GM12878 (cell line): ENCODE measurements at regions of chr5 and their contacts with region 1.

Region 1: DNA sequence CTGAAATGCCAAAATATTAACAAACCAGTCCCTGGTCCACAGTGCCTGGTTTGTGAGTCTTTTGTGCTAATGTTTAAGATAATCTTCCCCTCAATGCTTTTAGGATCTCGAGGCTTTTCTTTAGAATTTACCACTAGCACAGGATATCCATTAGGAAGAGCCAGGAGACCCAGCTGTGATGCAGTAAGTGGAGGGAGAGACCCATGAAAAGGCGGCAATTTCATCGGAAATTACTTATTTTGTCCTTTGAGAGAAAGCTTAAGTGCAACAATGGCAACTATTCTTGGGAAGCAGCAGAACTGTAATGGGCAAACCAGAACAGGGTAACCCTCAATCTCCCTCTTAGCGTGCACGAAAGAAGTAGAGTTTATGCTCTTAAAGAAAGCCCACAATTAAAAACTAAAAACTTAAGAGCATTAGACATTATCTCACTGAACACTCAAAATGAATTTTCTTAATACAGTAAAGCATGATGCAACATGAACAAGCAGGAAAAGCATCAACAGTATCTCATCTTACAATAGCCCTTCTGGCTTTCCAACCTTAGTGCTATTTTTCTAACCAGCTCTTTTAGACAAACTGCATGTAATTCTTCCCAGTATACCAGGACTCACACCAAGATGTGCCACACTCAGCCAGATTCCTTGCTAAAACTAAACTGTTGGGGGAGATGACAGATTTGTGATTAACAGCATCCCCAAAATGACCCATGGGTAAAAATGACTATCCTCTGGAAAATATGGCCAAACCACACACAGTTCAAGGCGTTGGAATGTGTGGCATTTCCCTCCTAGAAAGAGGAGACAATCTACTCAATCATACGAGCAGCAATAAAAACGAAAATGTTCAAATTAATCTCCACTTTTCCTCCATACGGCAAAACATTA is 36.4 kb downstream of the PWWP2A start:
- DNase-seq: no peak
- ATAC-seq: no peak
- H3K4me3 ChIP-seq: no peak overlapping the region
- H3K27ac ChIP-seq: no peak overlapping the region
- H3K4me1 ChIP-seq: no peaks in the 10 kb centered on the region
- H3K27me3 ChIP-seq: no peaks in the 10 kb centered on the region
- CTCF ChIP-seq: no peak
- EP300 ChIP-seq: no peak
- POLR2A ChIP-seq: no peak
- RAD21 ChIP-seq: no peak

Region 2: DNA sequence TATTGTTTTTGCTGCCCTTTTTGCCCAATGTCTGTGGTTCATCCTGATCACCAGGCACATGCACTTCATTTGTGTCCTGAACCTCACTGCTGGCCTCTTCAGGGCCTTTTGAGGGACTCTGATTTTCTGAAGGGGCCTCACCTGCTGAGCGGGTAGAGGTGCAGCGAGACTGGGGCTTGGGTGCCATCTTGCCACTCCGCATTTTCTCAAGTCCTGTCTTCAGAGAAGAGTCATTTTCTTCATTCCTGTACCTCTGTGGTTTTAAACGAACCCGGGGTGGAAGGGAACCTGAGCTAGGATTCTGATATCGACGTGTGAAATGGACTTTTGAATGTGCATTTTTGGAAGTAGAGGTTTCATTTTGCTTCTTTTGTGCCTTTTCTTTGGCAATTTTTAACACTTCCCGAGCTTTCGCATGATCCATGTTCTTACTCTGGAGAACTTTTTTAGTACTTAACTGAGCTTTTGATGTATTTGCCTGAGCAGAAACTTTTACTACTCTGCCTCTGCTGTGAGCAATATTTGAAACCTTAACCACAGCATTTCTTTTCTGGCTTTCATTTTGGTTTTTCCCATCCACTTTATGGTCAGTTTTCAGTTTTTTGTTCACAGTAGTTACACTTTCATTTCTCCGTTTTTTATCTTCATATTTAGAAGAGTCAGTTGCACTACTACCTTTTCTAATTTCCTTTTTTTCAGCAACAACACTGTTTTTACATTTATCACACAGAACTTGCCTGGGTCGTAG is 10.3 kb after region 1 on chr5:
- CTCF ChIA-PET with region 1: interaction called, 53 read pairs
- POLR2A ChIA-PET with region 1: interaction called, 3 read pairs
- RAD21 ChIA-PET with region 1: interaction called, 7 read pairs
- SMC1A ChIA-PET with region 1: interaction called, 22 read pairs
- in situ Hi-C with region 1: no loop called
- intact Hi-C with region 1: no loop called
- DNase-seq: peak; percentile 72
- ATAC-seq: peak; percentile 79
- H3K4me3 ChIP-seq: peak overlapping the region; percentile 60
- H3K27ac ChIP-seq: peak overlapping the region; percentile 73
- H3K4me1 ChIP-seq: peaks cover 38% of the 10 kb centered on the region
- H3K27me3 ChIP-seq: no peaks in the 10 kb centered on the region
- CTCF ChIP-seq: no peak
- EP300 ChIP-seq: peak in 1 of 2 experiments; percentile 50; a peak in 1 of 4 replicates
- POLR2A ChIP-seq: no peak
- RAD21 ChIP-seq: no peak

Region 3: DNA sequence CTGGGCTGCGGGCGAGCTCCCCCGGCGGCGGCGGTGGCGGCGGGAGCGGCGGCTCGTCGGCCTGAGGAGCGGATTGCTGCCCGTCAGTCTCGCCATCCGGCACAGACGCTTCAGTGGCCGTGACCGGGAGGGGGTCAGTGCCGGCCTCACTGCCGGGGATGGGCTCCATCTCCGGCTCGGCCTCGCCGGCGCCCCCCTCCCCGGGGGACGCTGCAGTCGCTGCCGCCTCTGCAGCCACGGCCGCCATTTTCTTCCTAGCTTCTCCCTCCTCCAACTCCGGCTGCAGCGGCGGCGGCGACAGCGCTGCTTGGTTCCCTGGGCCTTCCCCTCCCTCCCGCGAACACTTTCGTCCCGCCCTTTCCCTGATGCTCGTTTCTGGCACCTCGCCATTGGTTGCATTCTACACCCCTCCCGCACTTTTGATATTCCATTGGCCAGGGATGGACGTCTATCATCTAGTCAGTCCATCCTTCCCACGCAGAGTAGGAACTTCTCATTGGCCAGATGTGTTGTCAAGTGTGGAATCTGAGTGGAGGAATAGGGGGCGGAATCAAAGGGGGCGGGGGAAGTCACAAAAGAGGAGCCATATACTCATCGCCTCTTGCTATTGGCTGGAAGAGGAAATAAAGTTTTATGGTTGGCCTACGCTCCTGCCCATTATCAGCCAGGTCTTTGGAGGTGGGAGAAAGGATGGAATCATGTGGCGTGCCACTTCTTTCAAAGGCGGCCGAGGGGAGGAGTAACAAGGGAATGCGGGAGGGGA is 36.5 kb after region 1 on chr5 and contains the start of gene PWWP2A:
- CTCF ChIA-PET with region 1: interaction called, 17 read pairs
- POLR2A ChIA-PET with region 1: no interaction called
- RAD21 ChIA-PET with region 1: interaction called, 3 read pairs
- SMC1A ChIA-PET with region 1: interaction called, 3 read pairs
- in situ Hi-C with region 1: no loop called
- intact Hi-C with region 1: no loop called
- DNase-seq: peak; percentile 100
- ATAC-seq: peak; percentile 96
- H3K4me3 ChIP-seq: peak within 1 kb of the TSS; percentile 92
- H3K27ac ChIP-seq: peak within 1 kb of the TSS; percentile 83
- H3K4me1 ChIP-seq: peaks cover 3% of the 10 kb centered on the region
- H3K27me3 ChIP-seq: no peaks in the 10 kb centered on the region
- CTCF ChIP-seq: no peak
- EP300 ChIP-seq: no peak
- POLR2A ChIP-seq: peak; percentile 86
- RAD21 ChIP-seq: no peak
- polyA plus RNA-seq, gene PWWP2A: 5.7 to 6.9 TPM

Region 4: GRCh38 chr5:160199410-160199911 is 116.6 kb after region 1 on chr5:
- CTCF ChIA-PET with region 1: interaction called, 5 read pairs
- POLR2A ChIA-PET with region 1: no interaction called
- RAD21 ChIA-PET with region 1: interaction called, 7 read pairs
- SMC1A ChIA-PET with region 1: interaction called, 9 read pairs
- in situ Hi-C with region 1: no loop called
- intact Hi-C with region 1: loop called (anchors 2 kb)
- DNase-seq: no peak
- ATAC-seq: peak; percentile 99
- H3K4me3 ChIP-seq: peak overlapping the region; percentile 45; the same call in 1 of the 2 replicates
- H3K27ac ChIP-seq: no peak overlapping the region
- H3K4me1 ChIP-seq: peaks cover 8% of the 10 kb centered on the region; the same call in 1 of the 2 replicates
- H3K27me3 ChIP-seq: no peaks in the 10 kb centered on the region
- CTCF ChIP-seq: peak; percentile 74 to 85 (median 83); a peak in 5 of 6 replicates
- EP300 ChIP-seq: no peak
- POLR2A ChIP-seq: no peak
- RAD21 ChIP-seq: peak; percentile 90

Region 5: GRCh38 chr5:160390787-160391696 is 308.2 kb after region 1 on chr5:
- CTCF ChIA-PET with region 1: interaction called, 13 read pairs
- POLR2A ChIA-PET with region 1: no interaction called
- RAD21 ChIA-PET with region 1: interaction called, 14 read pairs
- SMC1A ChIA-PET with region 1: interaction called, 5 read pairs
- in situ Hi-C with region 1: no loop called
- intact Hi-C with region 1: loop called (anchors 5 kb)
- DNase-seq: no peak
- ATAC-seq: peak; percentile 69
- H3K4me3 ChIP-seq: no peak overlapping the region
- H3K27ac ChIP-seq: no peak overlapping the region
- H3K4me1 ChIP-seq: no peaks in the 10 kb centered on the region
- H3K27me3 ChIP-seq: no peaks in the 10 kb centered on the region
- CTCF ChIP-seq: peak; percentile 22 to 62 (median 30); a peak in 4 of 6 replicates
- EP300 ChIP-seq: no peak
- POLR2A ChIP-seq: no peak
- RAD21 ChIP-seq: peak; percentile 37; the same call in 1 of the 2 replicates